ENCODE measurements at regions of chr16 and their contacts with region 1.

Region 1: DNA sequence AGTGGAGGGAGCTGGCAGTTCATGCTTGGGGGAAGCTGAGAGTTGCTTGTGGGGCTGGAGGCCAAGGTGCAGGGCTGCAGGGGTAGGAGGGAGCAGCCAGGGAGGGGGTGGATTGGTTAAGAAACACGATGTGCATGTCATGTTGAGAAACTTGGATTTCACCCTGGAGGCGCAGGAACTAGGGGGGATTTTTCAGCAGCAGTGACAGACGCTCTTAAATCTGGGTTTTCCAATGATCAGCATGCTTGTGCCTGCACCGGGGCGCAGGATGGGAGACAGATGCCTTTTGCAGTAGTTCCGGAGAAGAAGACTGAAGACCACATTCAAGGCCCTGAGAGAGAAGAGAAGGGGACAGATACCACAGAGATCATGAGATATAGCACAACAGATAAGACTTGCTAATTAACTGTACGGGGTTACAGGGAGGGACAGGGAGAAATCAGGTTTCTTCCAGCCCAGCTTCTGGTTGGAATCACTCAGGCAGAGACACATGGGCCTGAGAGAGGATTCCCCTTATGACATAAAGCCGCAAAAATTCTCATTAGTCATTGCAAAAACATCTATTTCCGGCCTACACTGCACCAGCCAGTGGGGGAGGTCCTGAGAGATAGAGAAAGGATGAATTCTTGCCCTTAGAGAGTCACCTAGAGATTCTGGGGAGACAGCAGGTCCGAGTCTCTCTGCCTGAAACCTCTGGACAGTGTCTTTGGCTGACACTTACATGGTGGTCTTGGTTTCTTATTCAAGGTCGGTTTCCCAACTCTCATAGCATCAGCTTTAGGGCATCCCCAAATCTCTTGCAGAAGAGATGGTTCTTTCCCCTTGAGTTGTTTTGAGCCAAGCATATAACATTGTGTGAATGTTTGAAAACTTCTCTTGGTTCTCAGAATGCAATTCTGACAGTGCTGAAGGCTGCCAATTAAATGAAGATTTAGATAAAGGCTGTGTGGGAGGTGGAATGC is 27.1 kb downstream of the CDH13 start:
- DNase-seq: peak; percentile 57
- H3K4me3 Mint-ChIP-seq: peak overlapping the region; percentile 55
- H3K27ac Mint-ChIP-seq: peak overlapping the region; percentile 93
- H3K4me1 Mint-ChIP-seq: peaks cover 82% of the 10 kb centered on the region
- H3K27me3 Mint-ChIP-seq: peaks cover 4% of the 10 kb centered on the region

Region 2: DNA sequence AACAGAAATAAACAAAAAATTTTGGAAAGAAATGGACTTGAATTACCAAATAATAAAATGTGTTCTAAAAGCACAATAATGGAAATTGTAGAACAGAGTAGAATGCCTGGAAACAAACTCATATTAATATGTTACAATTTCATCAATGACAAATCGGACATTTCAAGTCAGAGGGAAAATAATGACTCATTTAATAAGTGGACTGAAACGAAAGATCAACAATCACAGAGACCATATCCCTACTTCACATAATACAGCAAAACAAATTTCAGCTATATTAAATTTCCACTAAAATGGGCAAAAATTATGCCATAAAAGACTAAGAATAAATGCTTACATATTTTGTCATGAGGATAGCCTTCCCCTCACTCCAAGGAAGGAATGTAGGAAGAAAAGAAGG is 1875.1 kb before region 1 on chr16:
- intact Hi-C with region 1: no loop called
- DNase-seq: no peak
- H3K4me3 Mint-ChIP-seq: no peak overlapping the region
- H3K27ac Mint-ChIP-seq: no peak overlapping the region
- H3K4me1 Mint-ChIP-seq: no peaks in the 10 kb centered on the region
- H3K27me3 Mint-ChIP-seq: peaks cover 4% of the 10 kb centered on the region

Region 3: GRCh38 chr16:80997139-80997798 is 1656.6 kb before region 1 on chr16:
- intact Hi-C with region 1: loop called (anchors 10 kb)
- DNase-seq: no peak
- H3K4me3 Mint-ChIP-seq: peak overlapping the region; percentile 81
- H3K27ac Mint-ChIP-seq: peak overlapping the region; percentile 93
- H3K4me1 Mint-ChIP-seq: peaks cover 81% of the 10 kb centered on the region
- H3K27me3 Mint-ChIP-seq: no peaks in the 10 kb centered on the region

Region 4: GRCh38 chr16:82192665-82193064 is 461.2 kb before region 1 on chr16:
- intact Hi-C with region 1: loop called (anchors 10 kb)
- DNase-seq: peak; percentile 15
- H3K4me3 Mint-ChIP-seq: no peak overlapping the region
- H3K27ac Mint-ChIP-seq: peak overlapping the region; percentile 86
- H3K4me1 Mint-ChIP-seq: peaks cover 28% of the 10 kb centered on the region
- H3K27me3 Mint-ChIP-seq: peaks cover 8% of the 10 kb centered on the region

Region 5: DNA sequence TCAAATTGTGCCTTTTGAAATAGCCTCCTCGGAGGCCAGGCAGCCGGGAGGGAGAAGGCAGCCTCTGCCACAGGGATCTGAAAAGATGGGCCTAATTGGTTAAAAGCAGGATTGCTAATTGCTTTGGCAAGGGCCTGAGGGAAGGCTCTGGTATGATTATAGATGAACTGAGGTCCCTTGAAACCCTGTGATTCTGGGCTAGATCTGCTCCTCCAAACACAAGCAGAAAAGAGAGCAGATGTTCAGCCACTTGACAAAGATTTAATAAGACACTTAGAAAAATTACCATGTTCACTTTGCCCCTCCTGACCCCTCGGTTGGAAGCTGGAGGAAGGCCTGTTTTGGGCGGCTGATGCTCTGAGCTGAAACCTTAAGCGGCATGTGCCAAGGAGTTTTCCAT is 274.3 kb before region 1 on chr16:
- intact Hi-C with region 1: no loop called
- DNase-seq: no peak
- H3K4me3 Mint-ChIP-seq: no peak overlapping the region
- H3K27ac Mint-ChIP-seq: no peak overlapping the region
- H3K4me1 Mint-ChIP-seq: no peaks in the 10 kb centered on the region
- H3K27me3 Mint-ChIP-seq: no peaks in the 10 kb centered on the region

Region 6: GRCh38 chr16:82456683-82457082 is 197.1 kb before region 1 on chr16:
- intact Hi-C with region 1: no loop called
- DNase-seq: no peak
- H3K4me3 Mint-ChIP-seq: no peak overlapping the region
- H3K27ac Mint-ChIP-seq: no peak overlapping the region
- H3K4me1 Mint-ChIP-seq: peaks cover 1% of the 10 kb centered on the region
- H3K27me3 Mint-ChIP-seq: peaks cover 2% of the 10 kb centered on the region

Region 7: GRCh38 chr16:82639666-82640336 is 14.0 kb before region 1 on chr16:
- intact Hi-C with region 1: loop called (anchors 1 kb)
- DNase-seq: peak; percentile 35
- H3K4me3 Mint-ChIP-seq: no peak overlapping the region
- H3K27ac Mint-ChIP-seq: no peak overlapping the region
- H3K4me1 Mint-ChIP-seq: peaks cover 32% of the 10 kb centered on the region
- H3K27me3 Mint-ChIP-seq: peaks cover 2% of the 10 kb centered on the region

Region 8: DNA sequence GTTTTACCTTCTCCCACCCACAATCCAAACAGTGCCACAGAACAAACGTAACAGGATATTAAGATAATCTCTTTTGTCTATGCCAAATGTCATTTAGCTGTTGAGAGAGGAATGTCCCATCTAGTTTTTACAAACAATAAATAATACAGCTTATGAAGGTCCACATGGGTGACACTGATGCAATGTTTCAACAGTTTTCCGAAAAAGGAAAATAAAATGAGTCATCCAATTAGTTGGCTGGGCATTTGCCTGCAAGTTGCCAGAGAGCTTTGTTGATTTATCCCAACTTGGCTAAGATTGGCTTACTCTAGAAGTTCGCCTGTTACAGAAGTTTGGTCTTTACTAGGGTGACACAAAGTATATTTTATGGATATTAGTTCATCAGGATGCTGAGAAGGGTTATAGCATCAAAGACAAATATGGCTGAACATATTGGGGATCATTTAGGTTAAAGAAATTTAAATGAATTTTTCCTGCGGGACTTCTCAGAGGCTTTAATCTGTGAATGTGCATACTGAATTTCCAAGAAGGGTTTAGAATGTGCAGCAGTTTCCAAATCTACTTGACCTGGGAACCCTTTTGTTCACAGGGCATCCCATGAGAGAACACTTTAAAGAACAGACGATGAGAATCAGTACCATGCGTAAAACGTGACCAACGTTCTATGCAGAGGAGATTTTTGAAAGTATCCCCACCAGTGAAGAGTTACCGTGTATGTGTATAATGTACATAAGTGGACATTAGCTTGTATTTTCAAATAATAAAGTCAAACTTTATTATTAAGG is 46.1 kb after region 1 on chr16:
- intact Hi-C with region 1: loop called (anchors 2 kb)
- DNase-seq: no peak
- H3K4me3 Mint-ChIP-seq: no peak overlapping the region
- H3K27ac Mint-ChIP-seq: no peak overlapping the region
- H3K4me1 Mint-ChIP-seq: peaks cover 30% of the 10 kb centered on the region
- H3K27me3 Mint-ChIP-seq: peaks cover 7% of the 10 kb centered on the region

Region 9: DNA sequence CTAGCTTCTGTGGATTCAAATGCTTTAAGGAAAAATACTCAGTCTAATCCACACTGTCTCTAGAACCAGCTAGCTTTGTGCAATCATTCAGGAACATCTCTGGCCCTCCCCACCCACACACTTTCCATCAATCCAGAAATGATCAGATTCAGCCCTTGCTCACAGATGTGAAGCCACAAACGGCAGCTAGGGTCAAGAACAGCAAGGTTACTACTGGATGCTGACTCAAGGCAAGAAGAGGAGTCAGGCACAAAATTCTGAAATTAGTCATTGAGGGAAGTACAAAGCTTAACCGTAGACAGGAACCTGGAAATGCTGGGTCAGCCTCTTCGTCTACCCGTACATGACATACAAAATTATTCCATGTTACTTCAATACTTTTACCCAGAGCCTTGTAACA is 147.5 kb after region 1 on chr16:
- intact Hi-C with region 1: loop called (anchors 5 kb)
- DNase-seq: no peak
- H3K4me3 Mint-ChIP-seq: no peak overlapping the region
- H3K27ac Mint-ChIP-seq: no peak overlapping the region
- H3K4me1 Mint-ChIP-seq: peaks cover 8% of the 10 kb centered on the region
- H3K27me3 Mint-ChIP-seq: peaks cover 3% of the 10 kb centered on the region

Measured in activated T-helper 2 cell treated with anti-CD3 and anti-CD28 coated beads, Interferon-gamma antibody, Interleukin-2, Interleukin-4, amounts not matched to agents 10 μg/mL and 5 μg/mL and 100 μg/mL, durations not matched to agents 14 hours and 24 hours and 36 hours (primary cell).